Caco-2 (cell line): ENCODE measurements at regions of chr11 and their contacts with region 1.

Region 1: DNA sequence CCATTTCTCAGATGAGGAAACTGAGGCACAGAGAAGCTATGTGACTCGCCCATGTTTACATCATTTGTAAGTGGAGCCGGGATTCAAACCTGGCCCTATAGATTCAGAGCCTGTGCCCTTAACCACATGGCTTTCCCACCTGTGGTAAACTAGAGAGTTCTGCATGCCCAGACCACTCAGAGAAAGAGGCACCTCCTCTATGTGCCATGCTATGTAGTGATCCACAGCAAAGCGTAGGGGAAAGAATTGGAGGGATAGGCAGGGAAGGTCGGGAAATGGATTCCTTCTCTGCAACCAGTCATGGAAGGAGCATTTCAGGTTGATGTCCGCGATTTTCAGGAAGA is 15.4 kb upstream of the POU2AF2 start:
- DNase-seq: no peak
- H3K4me3 ChIP-seq: no peak overlapping the region
- H3K4me3 Mint-ChIP-seq: peak overlapping the region; percentile 62
- H3K27ac Mint-ChIP-seq: no peak overlapping the region
- H3K4me1 ChIP-seq: no peaks in the 10 kb centered on the region
- H3K4me1 Mint-ChIP-seq: no peaks in the 10 kb centered on the region
- H3K27me3 ChIP-seq: no peaks in the 10 kb centered on the region
- H3K27me3 Mint-ChIP-seq: peaks cover 23% of the 10 kb centered on the region
- CTCF ChIP-seq: no peak

Region 2: DNA sequence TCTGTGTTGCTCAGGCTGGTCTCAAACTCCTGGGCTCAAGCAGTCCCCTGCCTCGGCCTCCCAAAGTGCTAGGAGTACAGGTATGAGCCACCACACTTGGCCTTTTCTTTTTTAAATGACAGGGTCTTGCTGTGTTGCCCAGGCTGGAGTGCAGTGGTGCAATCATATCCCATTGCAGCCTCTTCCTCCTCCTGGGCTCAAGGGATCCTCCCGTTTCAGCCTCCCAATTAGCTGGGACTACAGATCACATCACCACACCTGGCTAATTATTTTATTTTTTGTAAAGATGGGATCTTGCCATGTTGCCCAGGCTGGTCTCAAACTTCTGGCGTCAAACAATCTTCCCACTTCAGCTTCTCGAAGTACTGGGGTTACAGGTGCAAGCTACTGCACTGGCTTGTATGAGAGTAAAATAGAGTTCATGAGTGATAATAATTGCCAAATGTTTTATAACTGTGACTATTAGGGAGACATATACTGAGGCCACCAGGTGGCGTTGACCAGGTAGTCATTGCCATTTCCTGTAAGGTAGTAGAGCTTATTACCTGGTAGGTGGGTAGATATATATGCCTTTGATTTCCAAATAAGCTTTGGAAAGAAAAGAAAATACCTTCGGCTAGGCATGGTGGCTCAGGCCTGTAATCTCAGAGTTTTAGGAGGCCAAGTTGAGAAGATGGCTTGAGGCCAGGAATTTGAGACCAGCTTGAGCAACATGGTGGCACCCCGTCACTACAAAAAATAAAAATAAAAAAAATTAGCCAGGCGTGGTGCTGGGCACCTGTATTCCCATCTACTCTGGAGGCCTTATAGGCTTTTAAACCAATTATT is 794.9 kb before region 1 on chr11:
- CTCF ChIA-PET with region 1: interaction called, 3 read pairs
- POLR2A ChIA-PET with region 1: no interaction called
- intact Hi-C with region 1: loop called (anchors 1 kb)
- DNase-seq: peak; percentile 58 to 64
- H3K4me3 ChIP-seq: no peak overlapping the region
- H3K4me3 Mint-ChIP-seq: no peak overlapping the region
- H3K27ac Mint-ChIP-seq: no peak overlapping the region
- H3K4me1 ChIP-seq: peaks cover 30% of the 10 kb centered on the region
- H3K4me1 Mint-ChIP-seq: peaks cover 33% of the 10 kb centered on the region
- H3K27me3 ChIP-seq: no peaks in the 10 kb centered on the region
- H3K27me3 Mint-ChIP-seq: no peaks in the 10 kb centered on the region
- CTCF ChIP-seq: peak; percentile 62 to 63

Region 3: DNA sequence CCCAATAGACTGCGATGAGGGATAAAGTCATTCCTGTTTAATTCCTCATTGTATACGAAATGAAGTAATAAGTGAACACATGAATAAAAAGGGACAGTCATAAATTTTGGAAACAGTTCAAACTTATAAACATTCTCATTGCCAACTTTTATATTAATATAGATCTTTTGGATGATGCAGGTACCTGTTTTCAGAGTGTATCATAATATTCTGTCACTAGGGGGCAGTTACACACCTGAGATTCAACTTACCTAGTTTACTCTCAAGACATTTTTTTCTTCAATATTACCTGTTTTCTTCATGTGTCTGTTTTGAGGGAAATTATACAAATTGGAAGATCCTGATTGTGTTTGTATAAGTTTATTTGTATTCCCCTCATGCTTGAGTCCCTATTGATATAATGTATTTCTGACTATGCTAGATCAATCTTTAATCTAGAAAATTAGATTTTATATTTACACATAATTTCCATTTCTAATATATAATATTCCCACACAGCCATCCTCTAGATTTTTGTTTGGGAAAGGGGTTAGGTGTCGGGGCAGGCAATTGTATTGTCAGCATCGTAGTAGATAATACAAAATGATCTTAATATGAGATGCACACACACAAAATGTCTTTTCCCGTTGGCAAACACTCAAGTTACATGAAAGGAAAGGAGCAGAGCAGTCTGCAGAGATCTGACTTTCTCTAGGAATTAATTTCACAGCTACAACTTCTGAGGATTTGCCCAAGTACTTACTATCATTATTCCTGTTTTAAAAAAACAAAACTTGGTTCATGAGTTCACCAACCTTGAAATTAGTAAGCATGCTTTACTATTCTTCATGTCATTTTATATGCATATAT is 782.0 kb before region 1 on chr11:
- CTCF ChIA-PET with region 1: no interaction called
- POLR2A ChIA-PET with region 1: no interaction called
- intact Hi-C with region 1: loop called (anchors 1 kb)
- DNase-seq: no peak
- H3K4me3 ChIP-seq: no peak overlapping the region
- H3K4me3 Mint-ChIP-seq: no peak overlapping the region
- H3K27ac Mint-ChIP-seq: no peak overlapping the region
- H3K4me1 ChIP-seq: peaks cover 8% of the 10 kb centered on the region; the same call in 1 of the 2 replicates
- H3K4me1 Mint-ChIP-seq: peaks cover 16% of the 10 kb centered on the region
- H3K27me3 ChIP-seq: no peaks in the 10 kb centered on the region
- H3K27me3 Mint-ChIP-seq: no peaks in the 10 kb centered on the region
- CTCF ChIP-seq: peak; percentile 71 to 72

Region 4: GRCh38 chr11:110463153-110463552 is 766.9 kb before region 1 on chr11:
- CTCF ChIA-PET with region 1: interaction called, 4 read pairs
- POLR2A ChIA-PET with region 1: no interaction called
- intact Hi-C with region 1: loop called (anchors 1 kb)
- DNase-seq: peak; percentile 70 to 79
- H3K4me3 ChIP-seq: no peak overlapping the region
- H3K4me3 Mint-ChIP-seq: no peak overlapping the region
- H3K27ac Mint-ChIP-seq: peak overlapping the region; percentile 24
- H3K4me1 ChIP-seq: no peaks in the 10 kb centered on the region
- H3K4me1 Mint-ChIP-seq: no peaks in the 10 kb centered on the region
- H3K27me3 ChIP-seq: no peaks in the 10 kb centered on the region
- H3K27me3 Mint-ChIP-seq: no peaks in the 10 kb centered on the region
- CTCF ChIP-seq: peak; percentile 73 to 75

Region 5: DNA sequence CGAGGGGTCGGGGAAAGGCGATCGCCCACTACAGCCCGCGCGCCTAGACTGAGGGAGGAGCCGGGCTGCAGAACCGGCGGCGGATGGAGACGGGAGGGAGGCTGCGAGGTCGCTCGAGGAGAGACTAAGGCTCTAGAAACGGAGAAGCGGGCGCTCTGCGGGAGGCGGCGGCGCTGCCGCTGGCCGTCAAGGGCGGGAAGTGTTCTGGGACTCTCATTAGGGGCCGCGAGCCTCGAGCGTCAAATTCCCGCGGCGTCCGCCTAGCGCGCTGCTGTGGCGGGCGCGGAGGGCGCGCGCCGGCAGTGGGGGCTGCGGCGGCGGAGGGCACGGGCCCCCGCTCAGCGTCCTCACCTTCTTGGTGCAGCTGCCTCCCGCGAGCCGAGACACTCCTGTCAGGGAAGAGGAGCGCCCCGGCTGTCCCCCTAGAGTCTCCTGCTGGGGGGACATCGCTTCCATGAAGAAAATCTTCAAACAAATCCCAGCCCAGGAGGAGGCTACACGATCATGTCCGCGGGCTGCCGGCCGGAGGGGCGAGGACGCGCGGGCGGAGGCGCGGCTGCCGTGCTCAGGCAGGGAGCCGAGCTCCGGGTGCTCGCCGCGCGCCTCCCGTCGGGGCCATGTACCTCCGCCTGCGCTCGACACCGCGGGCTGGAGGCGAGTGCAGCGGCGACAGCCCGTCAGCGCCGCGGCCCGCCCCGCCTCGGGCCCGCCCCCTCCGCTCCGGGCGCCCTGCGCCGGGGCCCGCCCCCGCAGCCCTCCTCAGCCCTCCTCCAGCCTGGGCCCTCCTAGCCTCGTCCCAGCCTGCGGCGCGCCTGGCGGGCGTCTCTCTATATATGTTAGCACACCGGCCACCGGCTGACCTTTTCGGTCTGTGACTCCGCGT is 518.1 kb before region 1 on chr11 and contains the start of gene ARHGAP20:
- CTCF ChIA-PET with region 1: no interaction called
- POLR2A ChIA-PET with region 1: no interaction called
- intact Hi-C with region 1: loop called (anchors 5 kb)
- DNase-seq: peak; percentile 56 to 78
- H3K4me3 ChIP-seq: peak within 1 kb of the TSS; percentile 40
- H3K4me3 Mint-ChIP-seq: peak within 1 kb of the TSS; percentile 70
- H3K27ac Mint-ChIP-seq: no peak within 1 kb of the TSS
- H3K4me1 ChIP-seq: peaks cover 19% of the 10 kb centered on the region
- H3K4me1 Mint-ChIP-seq: peaks cover 14% of the 10 kb centered on the region
- H3K27me3 ChIP-seq: peaks cover 12% of the 10 kb centered on the region
- H3K27me3 Mint-ChIP-seq: peaks cover 46% of the 10 kb centered on the region
- CTCF ChIP-seq: no peak
- total RNA-seq, gene ARHGAP20: 0.05 TPM in 1 of 2 replicates, not detected in the other

Region 6: GRCh38 chr11:111047374-111047773 is 182.7 kb before region 1 on chr11:
- CTCF ChIA-PET with region 1: no interaction called
- POLR2A ChIA-PET with region 1: no interaction called
- intact Hi-C with region 1: loop called (anchors 10 kb)
- DNase-seq: no peak
- H3K4me3 ChIP-seq: no peak overlapping the region
- H3K4me3 Mint-ChIP-seq: no peak overlapping the region
- H3K27ac Mint-ChIP-seq: no peak overlapping the region
- H3K4me1 ChIP-seq: no peaks in the 10 kb centered on the region
- H3K4me1 Mint-ChIP-seq: no peaks in the 10 kb centered on the region
- H3K27me3 ChIP-seq: peaks cover 2% of the 10 kb centered on the region; the same call in 1 of the 2 replicates
- H3K27me3 Mint-ChIP-seq: peaks cover 14% of the 10 kb centered on the region
- CTCF ChIP-seq: no peak

Region 7: DNA sequence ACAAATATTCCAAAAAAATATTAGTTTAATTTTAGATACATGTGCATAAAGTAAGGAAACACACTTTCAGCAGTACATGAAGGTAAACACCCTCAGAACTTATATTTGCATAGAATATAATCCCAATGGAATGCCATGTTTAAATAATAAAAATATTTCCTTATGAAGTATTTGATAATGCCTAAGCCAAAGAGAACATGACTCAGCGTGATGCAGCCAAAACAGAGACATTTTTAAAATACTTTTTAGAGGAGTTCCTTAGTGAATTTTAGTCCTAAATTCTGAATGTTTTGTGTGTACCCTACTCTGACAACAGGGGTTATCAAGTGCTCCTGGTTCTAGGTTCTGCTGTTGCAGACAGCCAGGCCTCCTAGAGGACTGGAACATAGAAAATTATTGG is 23.6 kb before region 1 on chr11:
- CTCF ChIA-PET with region 1: no interaction called
- POLR2A ChIA-PET with region 1: no interaction called
- intact Hi-C with region 1: no loop called
- DNase-seq: no peak
- H3K4me3 ChIP-seq: no peak overlapping the region
- H3K4me3 Mint-ChIP-seq: no peak overlapping the region
- H3K27ac Mint-ChIP-seq: no peak overlapping the region
- H3K4me1 ChIP-seq: no peaks in the 10 kb centered on the region; the same call in 1 of the 2 replicates
- H3K4me1 Mint-ChIP-seq: no peaks in the 10 kb centered on the region
- H3K27me3 ChIP-seq: no peaks in the 10 kb centered on the region
- H3K27me3 Mint-ChIP-seq: peaks cover 15% of the 10 kb centered on the region
- CTCF ChIP-seq: no peak

Region 8: DNA sequence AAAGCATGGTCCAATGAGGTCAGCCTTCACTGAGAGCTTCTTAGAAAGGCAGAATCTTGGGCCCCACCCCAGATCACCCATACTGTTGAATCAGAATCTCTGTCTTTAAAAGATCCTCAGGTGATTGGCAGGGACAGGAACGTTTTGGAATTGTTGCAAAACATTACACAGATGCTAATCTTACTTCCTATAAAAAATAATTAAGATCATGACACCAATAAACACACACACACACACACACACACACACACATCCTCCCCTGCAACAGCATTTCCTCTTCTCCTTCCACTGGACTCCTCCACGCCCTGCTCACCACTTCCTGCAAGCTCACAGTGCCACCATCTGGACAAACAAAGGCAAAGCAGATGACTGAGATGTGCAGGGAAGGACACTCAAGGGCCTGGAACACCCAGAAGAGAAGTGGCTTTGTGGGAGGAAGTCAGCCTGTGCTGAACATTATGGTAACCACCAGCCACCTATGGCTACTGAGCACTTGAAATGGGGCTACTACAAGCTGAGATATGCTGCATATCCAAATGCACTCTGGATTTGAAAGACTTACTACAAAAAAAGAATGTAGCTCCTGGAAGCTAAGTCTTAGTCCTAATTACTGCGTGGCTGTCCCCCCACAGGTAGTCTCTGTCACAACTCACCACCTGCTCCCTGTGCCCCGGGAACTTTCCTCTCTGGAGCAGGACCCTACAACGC is 216.5 kb after region 1 on chr11:
- CTCF ChIA-PET with region 1: interaction called, 5 read pairs
- POLR2A ChIA-PET with region 1: no interaction called
- intact Hi-C with region 1: loop called (anchors 1 kb)
- DNase-seq: peak; percentile 91
- H3K4me3 ChIP-seq: no peak overlapping the region
- H3K4me3 Mint-ChIP-seq: no peak overlapping the region
- H3K27ac Mint-ChIP-seq: no peak overlapping the region
- H3K4me1 ChIP-seq: no peaks in the 10 kb centered on the region; the same call in 1 of the 2 replicates
- H3K4me1 Mint-ChIP-seq: no peaks in the 10 kb centered on the region
- H3K27me3 ChIP-seq: peaks cover 2% of the 10 kb centered on the region; the same call in 1 of the 2 replicates
- H3K27me3 Mint-ChIP-seq: peaks cover 2% of the 10 kb centered on the region
- CTCF ChIP-seq: peak; percentile 96 to 99